MCF 10A (cell line): ENCODE measurements at regions of chr12 and their contacts with region 1.

Region 1: DNA sequence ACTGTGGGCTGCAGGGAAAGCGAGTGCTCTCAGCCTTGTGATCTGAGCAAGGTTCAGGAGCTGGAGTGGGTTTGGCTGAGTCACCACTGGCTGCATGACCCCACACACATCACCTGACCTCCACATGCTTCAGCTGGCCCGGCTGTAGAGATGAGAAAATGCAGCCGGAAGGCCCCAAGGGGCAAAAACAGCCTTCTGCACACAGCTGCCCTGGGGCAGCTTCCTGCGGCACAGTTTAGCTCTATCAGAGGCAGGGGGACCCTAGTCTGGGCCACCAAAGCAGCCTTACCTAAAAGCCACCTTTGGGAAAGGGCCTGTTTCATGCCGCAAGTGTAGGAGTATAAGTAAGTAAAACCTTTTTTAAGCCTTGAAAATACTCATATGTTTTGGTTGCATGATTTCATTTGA is 123.3 kb downstream of the SSPN start:
- DNase-seq: peak; percentile 88
- H3K4me3 Mint-ChIP-seq: peak overlapping the region; percentile 53
- H3K27ac Mint-ChIP-seq: peak overlapping the region; percentile 89
- H3K4me1 Mint-ChIP-seq: peaks cover 32% of the 10 kb centered on the region
- H3K27me3 Mint-ChIP-seq: no peaks in the 10 kb centered on the region
- CTCF ChIP-seq: no peak

Region 2: GRCh38 chr12:26153421-26154154 is 165.1 kb before region 1 on chr12:
- CTCF ChIA-PET with region 1: interaction called, 3 read pairs
- POLR2A ChIA-PET with region 1: interaction called, 3 read pairs
- intact Hi-C with region 1: loop called (anchors 10 kb)
- DNase-seq: peak; percentile 75
- H3K4me3 Mint-ChIP-seq: no peak overlapping the region
- H3K27ac Mint-ChIP-seq: peak overlapping the region; percentile 18
- H3K4me1 Mint-ChIP-seq: peaks cover 11% of the 10 kb centered on the region
- H3K27me3 Mint-ChIP-seq: no peaks in the 10 kb centered on the region
- CTCF ChIP-seq: peak; percentile 5

Region 3: DNA sequence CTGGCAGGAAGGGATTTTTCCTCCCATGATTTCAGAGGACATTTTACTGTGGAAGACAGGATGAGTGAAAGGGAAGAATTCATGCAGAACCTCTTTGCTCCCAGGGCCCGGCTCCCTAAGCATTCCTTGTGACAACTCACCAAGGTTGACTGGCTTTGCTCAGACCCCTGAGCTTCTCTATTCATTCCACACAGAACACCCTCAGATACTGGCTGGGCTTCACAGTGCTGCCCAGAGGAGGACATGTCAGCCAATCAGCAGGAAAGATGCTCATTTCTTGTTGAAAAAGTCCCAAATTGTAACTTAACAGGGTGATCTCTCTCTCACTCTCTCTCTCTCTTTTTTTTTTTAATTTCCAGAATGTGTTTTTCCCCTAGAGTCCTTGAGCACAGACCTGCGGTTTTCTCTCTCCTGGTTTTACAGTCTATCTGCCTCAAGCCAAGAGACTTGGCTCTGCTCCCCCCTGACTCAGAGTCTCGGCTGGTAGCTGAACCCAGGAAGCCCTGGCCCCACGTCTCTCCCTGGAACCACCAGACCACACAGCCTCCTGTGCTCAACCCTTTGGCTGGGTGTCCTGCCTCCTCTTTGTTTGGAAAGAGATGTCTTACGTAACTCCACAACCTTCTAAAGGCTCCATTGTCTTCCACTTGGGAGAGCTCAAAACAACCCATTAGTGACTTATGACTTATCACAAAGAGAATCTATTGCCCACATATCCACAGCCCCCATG is 79.4 kb before region 1 on chr12:
- CTCF ChIA-PET with region 1: interaction called, 5 read pairs
- POLR2A ChIA-PET with region 1: no interaction called
- intact Hi-C with region 1: loop called (anchors 10 kb)
- DNase-seq: peak; percentile 98
- H3K4me3 Mint-ChIP-seq: no peak overlapping the region
- H3K27ac Mint-ChIP-seq: peak overlapping the region; percentile 17
- H3K4me1 Mint-ChIP-seq: peaks cover 18% of the 10 kb centered on the region
- H3K27me3 Mint-ChIP-seq: no peaks in the 10 kb centered on the region
- CTCF ChIP-seq: no peak

Region 4: GRCh38 chr12:26274441-26275312 is 44.0 kb before region 1 on chr12:
- CTCF ChIA-PET with region 1: no interaction called
- POLR2A ChIA-PET with region 1: interaction called, 87 read pairs
- intact Hi-C with region 1: loop called (anchors 1 kb)
- DNase-seq: peak; percentile 99
- H3K4me3 Mint-ChIP-seq: no peak overlapping the region
- H3K27ac Mint-ChIP-seq: peak overlapping the region; percentile 64
- H3K4me1 Mint-ChIP-seq: peaks cover 37% of the 10 kb centered on the region
- H3K27me3 Mint-ChIP-seq: no peaks in the 10 kb centered on the region
- CTCF ChIP-seq: no peak

Region 5: DNA sequence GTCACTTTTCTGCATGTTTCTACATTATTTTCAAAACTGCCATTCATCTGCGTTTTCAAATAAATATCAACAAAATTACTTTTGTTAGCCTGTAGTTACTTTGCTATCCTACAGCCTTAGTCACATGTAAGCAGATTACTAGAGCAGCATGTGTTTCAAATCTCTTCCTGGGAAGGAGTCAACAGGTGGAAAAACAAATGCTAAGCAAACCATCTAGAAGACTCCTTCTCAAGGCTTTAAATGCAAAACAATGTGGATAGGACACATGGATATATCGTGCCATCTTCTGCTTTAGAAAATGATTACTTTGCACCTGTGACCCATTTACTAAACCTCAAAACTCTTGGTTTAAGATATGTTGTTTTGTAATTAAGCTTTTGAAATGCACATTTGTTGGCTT is 14.4 kb before region 1 on chr12:
- CTCF ChIA-PET with region 1: interaction called, 8 read pairs
- POLR2A ChIA-PET with region 1: interaction called, 32 read pairs
- intact Hi-C with region 1: loop called (anchors 1 kb)
- DNase-seq: no peak
- H3K4me3 Mint-ChIP-seq: no peak overlapping the region
- H3K27ac Mint-ChIP-seq: no peak overlapping the region
- H3K4me1 Mint-ChIP-seq: peaks cover 7% of the 10 kb centered on the region
- H3K27me3 Mint-ChIP-seq: no peaks in the 10 kb centered on the region
- CTCF ChIP-seq: no peak